ENCODE measurements at regions of chr9 and their contacts with region 1.

Region 1: DNA sequence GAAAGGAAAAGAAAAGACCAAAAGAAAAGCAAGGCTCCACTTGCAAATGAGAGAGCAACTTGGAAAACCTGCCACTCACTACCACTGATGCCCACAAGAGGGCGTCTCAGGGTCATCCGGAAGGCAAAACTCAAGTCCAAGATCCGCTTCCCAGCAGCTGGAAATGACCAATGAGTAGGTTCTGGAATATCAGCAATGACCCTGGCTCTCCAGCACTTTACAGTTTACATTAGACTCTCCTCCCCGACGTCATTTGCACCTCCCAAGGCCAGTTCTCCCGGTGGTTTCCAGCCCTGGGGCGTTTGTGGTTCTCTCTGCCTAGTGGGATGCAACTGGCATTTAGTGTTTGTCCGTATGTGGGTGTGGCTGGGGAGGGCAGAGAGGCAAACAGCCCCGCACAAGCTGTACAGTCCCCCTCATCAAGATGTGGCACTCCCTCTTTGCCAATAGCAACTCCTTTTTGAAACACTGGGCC is 193.8 kb upstream of the ZNF618 start:
- H3K4me3 ChIP-seq: no peak overlapping the region
- H3K27ac ChIP-seq: no peak overlapping the region
- H3K4me1 ChIP-seq: no peaks in the 10 kb centered on the region
- CTCF ChIP-seq: peak; percentile 58; the same call in 1 of the 2 replicates

Region 2: DNA sequence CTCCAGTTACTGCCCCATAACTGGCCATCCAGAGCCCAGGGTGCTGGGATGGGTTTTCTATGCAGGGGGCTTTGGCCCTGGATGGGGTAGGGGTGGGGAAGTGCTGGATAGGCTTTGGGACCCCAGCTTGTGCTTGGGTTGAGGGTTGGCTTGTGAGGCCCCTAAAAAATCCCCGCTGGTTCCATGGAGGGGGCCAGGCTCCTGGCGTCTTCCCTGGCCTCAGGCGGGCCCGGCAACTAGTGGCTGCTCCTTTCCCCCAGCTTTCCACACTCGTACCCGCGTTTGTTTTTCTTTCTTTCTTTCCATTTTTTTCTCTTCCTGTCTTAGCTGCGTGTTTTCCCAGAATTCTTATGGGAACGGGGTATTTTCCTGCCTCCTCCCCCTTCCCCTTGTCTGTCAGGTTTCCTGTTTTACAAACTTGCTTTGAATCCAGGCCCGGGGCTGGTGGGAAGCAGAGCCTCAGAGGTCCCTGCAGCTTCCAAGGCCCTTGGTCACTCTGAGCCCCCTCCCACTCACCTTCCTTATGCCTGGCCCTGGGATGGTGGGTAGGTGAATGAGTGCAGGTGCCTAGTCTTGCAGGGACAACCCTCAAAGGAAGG is 178.6 kb before region 1 on chr9:
- CTCF ChIA-PET with region 1: no interaction called
- POLR2A ChIA-PET with region 1: no interaction called
- H3K4me3 ChIP-seq: no peak overlapping the region
- H3K27ac ChIP-seq: no peak overlapping the region
- H3K4me1 ChIP-seq: no peaks in the 10 kb centered on the region
- CTCF ChIP-seq: no peak

Region 3: DNA sequence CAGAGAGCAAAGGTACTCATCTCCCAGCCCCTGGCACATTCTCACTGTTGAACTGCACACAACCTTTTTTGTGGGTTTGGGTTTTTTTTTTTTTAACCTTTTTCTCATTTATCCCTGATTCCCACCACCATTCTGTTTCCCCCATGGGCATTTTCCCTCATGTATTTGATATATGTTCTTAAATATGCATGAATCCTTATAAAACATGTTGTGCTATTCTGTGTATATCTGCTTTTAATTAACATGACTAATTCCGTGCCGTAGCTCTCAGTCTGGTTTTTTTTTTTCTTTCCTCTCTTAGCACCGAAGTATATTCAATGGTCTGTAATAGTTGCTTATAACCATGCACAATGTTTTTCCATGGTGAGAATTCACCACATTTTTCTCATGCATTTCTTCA is 14.3 kb before region 1 on chr9:
- CTCF ChIA-PET with region 1: interaction called, 18 read pairs
- POLR2A ChIA-PET with region 1: no interaction called
- H3K4me3 ChIP-seq: no peak overlapping the region
- H3K27ac ChIP-seq: no peak overlapping the region
- H3K4me1 ChIP-seq: no peaks in the 10 kb centered on the region
- CTCF ChIP-seq: no peak

Region 4: GRCh38 chr9:113712023-113712422 is 29.7 kb after region 1 on chr9:
- CTCF ChIA-PET with region 1: interaction called, 15 read pairs
- POLR2A ChIA-PET with region 1: no interaction called
- H3K4me3 ChIP-seq: no peak overlapping the region
- H3K27ac ChIP-seq: no peak overlapping the region
- H3K4me1 ChIP-seq: no peaks in the 10 kb centered on the region
- CTCF ChIP-seq: no peak